Activated CD4-positive, alpha-beta T cell treated with anti-CD3 and anti-CD28 coated beads for 36 hours (primary cell): ENCODE measurements at regions of chr7 and their contacts with region 1.

Region 1: GRCh38 chr7:50246551-50246950 is 58.0 kb upstream of the IKZF1 start:
- DNase-seq: no peak
- ATAC-seq: no peak
- H3K4me3 Mint-ChIP-seq: no peak overlapping the region
- H3K27ac Mint-ChIP-seq: no peak overlapping the region
- H3K4me1 Mint-ChIP-seq: peaks cover 18% of the 10 kb centered on the region
- H3K27me3 Mint-ChIP-seq: no peaks in the 10 kb centered on the region

Region 2: GRCh38 chr7:50147951-50148808 is 98.4 kb before region 1 on chr7:
- CTCF ChIA-PET with region 1: no interaction called
- POLR2A ChIA-PET with region 1: no interaction called
- intact Hi-C with region 1: no loop called
- DNase-seq: peak; percentile 65
- ATAC-seq: peak; percentile 89
- H3K4me3 Mint-ChIP-seq: peak overlapping the region; percentile 40
- H3K27ac Mint-ChIP-seq: peak overlapping the region; percentile 90
- H3K4me1 Mint-ChIP-seq: peaks cover 85% of the 10 kb centered on the region
- H3K27me3 Mint-ChIP-seq: no peaks in the 10 kb centered on the region

Region 3: DNA sequence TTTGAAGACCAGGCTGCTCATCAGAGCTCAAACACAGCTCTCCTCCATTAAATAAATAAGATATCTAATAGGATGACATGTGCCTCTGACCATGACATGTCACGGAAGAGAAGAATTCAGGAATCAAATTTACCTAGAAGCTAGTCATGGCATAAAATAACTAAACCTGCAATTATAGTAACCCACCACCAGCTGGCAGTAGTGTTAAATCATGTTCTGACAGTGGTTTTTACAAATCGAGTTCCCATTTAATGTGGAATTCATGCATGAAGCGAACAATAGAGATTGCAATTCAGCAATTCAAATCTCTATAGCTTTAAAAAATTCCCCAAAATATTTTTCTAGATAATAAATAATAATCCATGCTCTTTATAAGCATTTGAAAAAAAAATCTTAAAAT is 16.6 kb before region 1 on chr7:
- CTCF ChIA-PET with region 1: interaction called, 7 read pairs
- POLR2A ChIA-PET with region 1: no interaction called
- intact Hi-C with region 1: loop called in 1 of 2 experiments (anchors 2 kb)
- DNase-seq: no peak
- ATAC-seq: no peak
- H3K4me3 Mint-ChIP-seq: no peak overlapping the region
- H3K27ac Mint-ChIP-seq: no peak overlapping the region
- H3K4me1 Mint-ChIP-seq: peaks cover 37% of the 10 kb centered on the region
- H3K27me3 Mint-ChIP-seq: no peaks in the 10 kb centered on the region

Region 4: DNA sequence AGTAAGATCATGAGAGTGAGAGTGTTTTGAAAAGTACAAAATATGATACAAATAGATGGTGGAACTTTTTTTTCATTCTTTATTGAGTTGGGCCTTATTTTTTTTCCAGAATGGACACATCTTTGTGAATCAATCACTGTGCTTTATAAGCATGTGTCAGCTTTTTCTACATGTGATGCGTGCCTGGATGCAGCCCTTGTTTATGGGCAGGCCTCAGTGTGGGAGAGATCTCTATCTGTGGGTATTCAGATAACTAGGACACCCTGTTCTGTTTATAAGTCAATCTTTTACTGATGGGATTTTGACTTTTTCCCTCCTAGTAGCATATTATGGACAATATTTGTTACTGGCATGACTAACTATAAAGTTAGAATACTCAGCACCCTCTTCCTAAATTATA is 15.0 kb after region 1 on chr7:
- CTCF ChIA-PET with region 1: interaction called, 5 read pairs
- POLR2A ChIA-PET with region 1: no interaction called
- intact Hi-C with region 1: loop called in 1 of 2 experiments (anchors 2 kb)
- DNase-seq: peak; percentile 51
- ATAC-seq: peak; percentile 17
- H3K4me3 Mint-ChIP-seq: no peak overlapping the region
- H3K27ac Mint-ChIP-seq: peak overlapping the region; percentile 85
- H3K4me1 Mint-ChIP-seq: peaks cover 83% of the 10 kb centered on the region
- H3K27me3 Mint-ChIP-seq: no peaks in the 10 kb centered on the region